Keratinocyte (primary cell): ENCODE measurements at regions of chr18 and their contacts with region 1.

Region 1: DNA sequence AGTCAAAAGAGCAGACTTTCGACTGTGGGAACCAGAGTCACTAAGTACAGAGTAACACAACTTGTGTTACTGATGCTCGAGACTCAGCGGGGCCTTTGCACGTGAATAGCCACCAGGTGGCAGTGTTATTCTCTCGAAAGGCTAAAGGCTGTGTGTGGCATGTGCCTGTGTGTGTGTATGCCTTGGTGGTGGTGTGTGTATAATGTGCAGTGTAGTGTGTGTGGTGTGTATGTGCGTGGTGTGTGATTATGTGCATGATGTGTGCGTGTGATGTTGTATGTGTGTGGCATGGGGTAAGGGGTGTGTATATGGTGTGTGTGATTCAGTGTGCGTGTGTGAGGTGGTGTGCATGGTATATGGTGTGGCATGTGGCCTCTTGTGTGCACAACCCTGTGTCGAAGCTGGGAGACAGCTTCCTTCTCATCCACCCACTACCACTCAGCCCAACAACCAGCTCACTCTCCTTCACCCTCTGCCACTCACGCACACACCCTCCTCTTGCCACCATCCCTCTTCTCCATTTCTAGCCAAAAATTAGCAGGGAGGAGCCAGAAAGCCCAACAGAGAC is 83.0 kb upstream of the ZNF532 start:
- DNase-seq: peak; percentile 61
- H3K4me3 ChIP-seq: no peak overlapping the region
- H3K27ac ChIP-seq: no peak overlapping the region
- H3K4me1 ChIP-seq: peaks cover 28% of the 10 kb centered on the region
- H3K27me3 ChIP-seq: no peaks in the 10 kb centered on the region
- CTCF ChIP-seq: peak; percentile 77 to 98 (median 97)

Region 2: DNA sequence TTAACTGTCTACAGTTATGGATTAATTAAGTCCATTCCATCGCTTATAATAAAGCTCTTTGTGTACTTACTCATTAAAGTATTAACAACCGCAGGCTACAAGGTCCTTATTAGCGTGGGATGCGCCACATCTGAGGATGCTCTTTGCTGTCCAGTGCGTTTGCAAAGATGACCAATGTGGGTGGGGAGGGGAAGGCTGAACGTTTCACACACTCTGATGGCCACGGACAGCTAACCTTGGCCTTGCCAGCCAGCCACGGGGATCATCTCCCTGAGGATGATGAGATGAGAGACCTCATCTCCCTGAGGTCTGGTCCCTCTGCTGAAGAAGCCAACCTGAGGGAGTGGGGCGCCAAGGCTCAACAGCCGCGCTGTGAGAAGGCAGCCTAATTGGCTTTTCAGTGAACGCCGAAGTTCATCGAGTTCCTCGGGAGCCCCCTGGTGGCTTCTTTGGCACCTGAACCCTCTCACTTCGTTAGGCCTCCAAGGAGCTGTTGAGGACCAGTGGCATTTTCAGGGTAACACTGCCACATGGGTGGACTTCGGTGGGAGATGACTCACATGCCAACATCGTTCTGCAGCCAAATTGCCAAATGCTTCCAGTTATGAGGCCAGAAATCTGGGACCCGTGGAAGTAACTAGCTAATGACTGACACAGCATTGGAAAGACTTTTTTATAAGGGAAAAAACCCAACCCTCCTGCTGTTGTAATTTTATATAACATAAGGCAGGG is 288.6 kb after region 1 on chr18:
- dilution Hi-C with region 1: loop called (anchors 25 kb)
- DNase-seq: peak; percentile 32
- H3K4me3 ChIP-seq: no peak overlapping the region
- H3K27ac ChIP-seq: no peak overlapping the region
- H3K4me1 ChIP-seq: no peaks in the 10 kb centered on the region
- H3K27me3 ChIP-seq: no peaks in the 10 kb centered on the region
- CTCF ChIP-seq: peak; percentile 75 to 88 (median 87)